ENCODE measurements at regions of chr4 and their contacts with region 1.

Region 1: GRCh38 chr4:118772081-118772766 is 63.7 kb downstream of the SEC24D start:
- DNase-seq: no peak
- H3K4me3 Mint-ChIP-seq: no peak overlapping the region
- H3K27ac Mint-ChIP-seq: no peak overlapping the region
- H3K4me1 Mint-ChIP-seq: no peaks in the 10 kb centered on the region
- H3K27me3 Mint-ChIP-seq: no peaks in the 10 kb centered on the region

Region 2: GRCh38 chr4:118865091-118865708 is 93.0 kb after region 1 on chr4:
- intact Hi-C with region 1: loop called (anchors 1 kb)
- DNase-seq: peak; percentile 73
- H3K4me3 Mint-ChIP-seq: no peak overlapping the region
- H3K27ac Mint-ChIP-seq: no peak overlapping the region
- H3K4me1 Mint-ChIP-seq: no peaks in the 10 kb centered on the region
- H3K27me3 Mint-ChIP-seq: peaks cover 9% of the 10 kb centered on the region

Region 3: DNA sequence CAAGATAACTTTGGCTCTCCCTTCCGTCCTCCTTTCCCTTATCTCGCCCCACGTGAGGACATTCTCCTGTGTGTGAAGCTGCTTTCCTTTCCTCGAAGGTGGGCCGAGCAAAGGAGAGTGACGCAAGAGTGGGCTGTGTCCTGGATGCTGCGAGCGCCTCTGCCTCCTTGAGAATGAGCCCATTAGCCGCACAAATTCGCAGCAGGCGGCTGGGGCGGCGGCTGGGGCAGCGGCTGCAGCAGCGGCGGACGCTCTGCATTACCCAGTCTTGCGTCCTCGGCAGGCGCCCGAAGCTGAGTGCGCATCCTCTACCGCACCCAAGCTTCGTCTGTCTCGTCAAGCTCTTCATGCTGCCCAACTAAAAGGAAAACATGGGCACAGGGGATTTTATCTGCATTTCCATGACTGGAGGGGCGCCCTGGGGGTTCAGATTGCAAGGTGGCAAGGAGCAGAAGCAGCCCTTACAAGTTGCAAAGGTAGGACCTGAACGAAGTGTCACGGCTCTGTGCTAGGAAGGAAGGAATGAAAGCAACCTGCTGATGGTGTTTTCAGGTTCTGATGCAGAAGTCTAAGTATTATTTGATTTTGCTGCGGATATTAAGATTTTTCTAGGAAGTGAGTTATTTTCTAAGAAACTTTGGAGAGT is 116.6 kb after region 1 on chr4 and contains the start of gene SYNPO2:
- intact Hi-C with region 1: loop called (anchors 1 kb)
- DNase-seq: peak; percentile 76
- H3K4me3 Mint-ChIP-seq: peak within 1 kb of the TSS; percentile 86
- H3K27ac Mint-ChIP-seq: no peak within 1 kb of the TSS
- H3K4me1 Mint-ChIP-seq: peaks cover 14% of the 10 kb centered on the region
- H3K27me3 Mint-ChIP-seq: peaks cover 41% of the 10 kb centered on the region
- total RNA-seq, gene SYNPO2: 0.14 and 0.16 TPM in 2 replicates

Region 4: DNA sequence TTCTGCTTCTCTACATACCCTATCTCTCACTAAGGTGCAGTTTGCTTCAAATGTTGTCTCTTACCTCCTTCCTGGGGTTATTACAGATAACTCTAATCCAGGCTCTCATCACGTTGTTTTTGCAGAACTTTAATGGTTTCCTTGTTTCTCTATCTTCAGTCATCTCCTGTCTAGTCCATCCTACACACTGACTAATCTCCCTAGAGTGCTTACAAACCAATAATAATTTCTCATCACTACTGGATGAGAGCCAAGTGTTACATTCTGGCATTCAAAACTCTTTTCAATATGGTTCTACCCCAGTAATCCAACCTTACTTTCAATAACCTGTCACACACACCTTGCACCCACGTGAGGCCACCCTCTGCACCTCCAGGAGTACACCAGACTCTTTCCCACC is 202.5 kb after region 1 on chr4:
- intact Hi-C with region 1: loop called (anchors 5 kb)
- DNase-seq: no peak
- H3K4me3 Mint-ChIP-seq: no peak overlapping the region
- H3K27ac Mint-ChIP-seq: no peak overlapping the region
- H3K4me1 Mint-ChIP-seq: no peaks in the 10 kb centered on the region
- H3K27me3 Mint-ChIP-seq: peaks cover 2% of the 10 kb centered on the region

Region 5: DNA sequence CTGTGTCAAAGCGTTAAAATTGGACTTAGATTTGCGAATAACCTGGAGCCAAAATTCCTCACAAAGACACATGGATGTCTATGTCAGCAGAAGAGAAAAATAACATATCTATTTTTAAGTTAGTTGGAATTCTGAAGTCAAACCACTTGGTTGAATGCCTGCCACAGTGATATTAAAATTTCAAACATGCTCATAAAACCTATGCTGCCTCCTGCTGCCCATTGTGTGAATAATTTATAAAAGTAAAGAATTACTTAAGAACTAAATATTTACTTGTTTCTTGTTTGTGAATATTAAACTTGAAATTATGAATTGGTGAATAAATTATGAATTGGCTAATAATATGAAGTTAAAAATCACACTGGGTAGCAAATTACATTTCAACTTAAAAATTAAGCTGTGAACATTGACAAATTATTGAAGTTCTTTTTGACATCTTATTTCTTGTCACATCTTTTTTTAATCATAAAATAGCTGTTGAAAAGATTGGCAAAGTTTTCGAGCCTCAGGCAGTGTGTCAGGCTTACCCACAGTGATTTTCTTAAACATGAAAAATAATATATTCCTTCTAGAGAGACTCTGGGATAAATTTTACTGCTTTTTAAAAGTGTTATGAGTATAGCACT is 514.3 kb after region 1 on chr4:
- intact Hi-C with region 1: loop called (anchors 5 kb)
- DNase-seq: peak; percentile 78
- H3K4me3 Mint-ChIP-seq: no peak overlapping the region
- H3K27ac Mint-ChIP-seq: no peak overlapping the region
- H3K4me1 Mint-ChIP-seq: peaks cover 14% of the 10 kb centered on the region
- H3K27me3 Mint-ChIP-seq: no peaks in the 10 kb centered on the region